GM18951 (cell line): ENCODE measurements at regions of chr21 and their contacts with region 1.

Region 1: DNA sequence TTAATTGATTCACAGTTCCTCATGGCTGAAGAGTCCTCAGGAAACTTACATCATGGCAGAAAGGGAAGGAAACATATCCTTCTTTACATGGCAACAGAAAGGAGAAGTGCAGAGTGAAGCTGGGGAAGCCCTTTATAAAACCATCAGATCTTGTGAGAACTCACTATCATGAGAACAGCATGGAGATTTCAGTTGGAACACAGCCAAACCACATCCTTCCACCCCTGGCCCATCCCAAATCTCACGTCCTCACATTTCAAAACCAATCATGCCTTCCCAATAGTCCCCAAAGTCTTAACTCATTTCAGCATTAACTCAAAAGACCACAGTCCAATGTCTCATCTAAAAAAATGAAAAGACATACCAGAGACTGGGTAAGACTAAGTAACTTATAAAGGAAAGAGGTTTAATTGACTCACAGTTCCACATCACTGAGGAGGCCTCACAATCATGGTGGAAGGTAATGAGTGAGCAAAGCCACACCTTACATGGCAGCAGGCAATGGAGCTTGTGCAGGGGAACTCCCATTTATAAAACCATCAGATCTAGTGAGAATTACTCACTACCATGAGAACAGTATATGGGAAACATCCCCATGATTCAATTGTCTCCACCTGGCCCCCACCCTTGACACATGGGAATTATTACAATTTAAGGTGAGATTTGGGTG is 105.2 kb downstream of the MRPL39 start:
- POLR2A ChIP-seq: no peak

Region 2: DNA sequence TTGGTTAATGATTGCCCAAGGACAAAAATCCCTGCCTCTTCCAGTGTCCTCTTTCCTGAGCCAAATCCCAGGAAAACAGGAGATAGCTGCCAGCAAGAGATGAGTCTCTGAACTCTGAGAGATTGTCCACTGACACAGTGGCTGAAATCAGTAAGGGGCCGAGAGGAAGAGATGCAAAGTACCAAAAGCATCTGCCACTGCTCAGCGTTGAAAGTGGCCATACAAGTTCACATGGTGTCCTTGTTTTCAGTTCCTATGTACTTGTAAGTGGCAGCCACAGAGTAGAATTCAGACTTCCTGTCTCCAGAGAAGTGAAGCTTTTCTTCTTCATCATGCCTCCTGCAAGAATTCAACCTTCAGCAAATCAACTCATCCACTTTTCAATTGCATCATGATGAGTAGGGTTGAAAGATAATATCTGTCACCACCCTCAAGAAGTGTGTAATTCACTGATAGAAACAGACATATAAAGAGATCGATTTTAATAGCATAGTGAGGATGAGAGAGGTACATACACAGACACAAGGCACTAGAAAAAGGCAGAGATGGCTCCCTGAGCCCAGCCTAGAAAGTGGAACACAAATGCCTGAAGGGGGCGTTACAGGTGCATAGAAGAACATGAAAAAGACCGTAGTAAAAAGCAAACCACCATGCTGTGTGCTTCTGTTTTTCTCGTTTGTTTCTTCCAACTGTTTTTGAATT is 80.7 kb before region 1 on chr21:
- in situ Hi-C with region 1: loop called (anchors 10 kb)
- POLR2A ChIP-seq: no peak

Region 3: DNA sequence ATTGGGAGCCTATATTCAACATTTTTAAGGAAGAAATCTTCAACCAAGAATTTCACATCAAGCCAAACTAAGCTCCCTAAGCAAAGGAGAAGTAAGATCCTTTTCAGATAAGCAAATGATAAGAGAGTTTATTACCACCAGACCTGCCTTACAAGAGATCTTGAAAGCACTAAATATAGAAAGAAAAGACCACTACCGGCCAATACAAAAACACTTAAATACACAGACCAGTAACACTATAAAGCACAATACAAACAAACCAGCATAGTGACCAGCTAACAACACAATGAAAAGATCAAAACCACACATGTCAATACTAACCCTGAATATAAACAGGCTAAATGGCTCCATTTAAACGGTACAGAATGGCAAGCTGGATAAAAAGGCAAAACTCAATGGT is 60.3 kb before region 1 on chr21:
- in situ Hi-C with region 1: no loop called
- POLR2A ChIP-seq: no peak